ENCODE measurements at regions of chr1 and their contacts with region 1.

Region 1: GRCh38 chr1:161225534-161226319 is at the start of gene TOMM40L:
- DNase-seq: peak; percentile 92
- H3K4me3 Mint-ChIP-seq: peak within 1 kb of the TSS; percentile 100
- H3K27ac Mint-ChIP-seq: peak within 1 kb of the TSS; percentile 86
- H3K4me1 Mint-ChIP-seq: peaks cover 23% of the 10 kb centered on the region
- H3K27me3 Mint-ChIP-seq: no peaks in the 10 kb centered on the region
- total RNA-seq, gene TOMM40L: 14.8 to 15.4 TPM

Region 2: DNA sequence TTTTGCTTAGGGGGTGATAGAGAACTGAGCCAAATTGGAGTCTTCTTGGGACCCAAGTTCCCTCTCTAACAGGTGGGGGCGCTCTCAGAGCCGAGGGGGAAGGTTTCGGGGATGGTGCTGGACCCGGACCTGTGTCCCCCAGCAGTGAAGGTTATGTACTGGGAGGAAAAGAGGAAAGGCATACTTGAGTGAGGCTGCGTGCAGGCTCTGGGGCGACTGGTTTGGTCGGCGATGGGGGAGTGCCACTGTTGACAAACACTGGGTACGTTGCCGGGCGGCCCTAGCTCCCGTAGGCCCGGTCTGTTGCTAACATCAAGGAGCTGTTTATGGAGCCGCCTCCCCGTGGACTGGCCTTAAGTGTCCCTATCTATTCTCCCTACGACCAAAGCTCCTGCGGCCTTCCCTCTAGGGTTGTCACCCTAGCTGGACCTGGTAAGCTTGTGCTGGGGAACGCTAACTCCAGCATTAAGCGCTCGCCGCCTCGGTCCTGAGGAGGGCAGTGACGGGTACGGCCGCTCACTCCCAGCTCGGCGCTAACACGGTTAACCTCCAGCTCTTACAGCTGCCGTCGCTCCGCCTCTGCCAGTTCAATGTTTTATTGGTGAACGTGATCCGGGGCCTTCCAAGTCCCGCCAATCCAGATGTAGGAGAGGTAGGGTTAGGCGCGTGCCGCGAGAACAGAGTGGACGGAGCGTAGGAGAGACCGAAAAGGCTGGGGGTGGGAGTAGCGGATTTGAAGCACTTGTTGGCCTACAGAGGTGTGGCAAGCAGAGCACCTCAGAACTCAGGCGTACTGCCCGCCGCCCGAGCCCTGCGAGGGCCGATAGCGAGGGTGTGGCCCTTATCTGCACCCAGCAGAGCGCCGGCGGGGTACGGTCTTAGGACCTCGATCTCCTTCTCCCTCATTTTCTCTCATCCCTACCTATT is 59.7 kb before region 1 on chr1 and contains the start of gene PPOX:
- CTCF ChIA-PET with region 1: interaction called, 32 read pairs
- POLR2A ChIA-PET with region 1: interaction called, 3 read pairs
- intact Hi-C with region 1: loop called (anchors 1 kb)
- DNase-seq: peak; percentile 97
- H3K4me3 Mint-ChIP-seq: peak within 1 kb of the TSS; percentile 86
- H3K27ac Mint-ChIP-seq: peak within 1 kb of the TSS; percentile 93
- H3K4me1 Mint-ChIP-seq: peaks cover 48% of the 10 kb centered on the region
- H3K27me3 Mint-ChIP-seq: no peaks in the 10 kb centered on the region
- total RNA-seq, gene PPOX: 27.0 to 30.7 TPM

Region 3: DNA sequence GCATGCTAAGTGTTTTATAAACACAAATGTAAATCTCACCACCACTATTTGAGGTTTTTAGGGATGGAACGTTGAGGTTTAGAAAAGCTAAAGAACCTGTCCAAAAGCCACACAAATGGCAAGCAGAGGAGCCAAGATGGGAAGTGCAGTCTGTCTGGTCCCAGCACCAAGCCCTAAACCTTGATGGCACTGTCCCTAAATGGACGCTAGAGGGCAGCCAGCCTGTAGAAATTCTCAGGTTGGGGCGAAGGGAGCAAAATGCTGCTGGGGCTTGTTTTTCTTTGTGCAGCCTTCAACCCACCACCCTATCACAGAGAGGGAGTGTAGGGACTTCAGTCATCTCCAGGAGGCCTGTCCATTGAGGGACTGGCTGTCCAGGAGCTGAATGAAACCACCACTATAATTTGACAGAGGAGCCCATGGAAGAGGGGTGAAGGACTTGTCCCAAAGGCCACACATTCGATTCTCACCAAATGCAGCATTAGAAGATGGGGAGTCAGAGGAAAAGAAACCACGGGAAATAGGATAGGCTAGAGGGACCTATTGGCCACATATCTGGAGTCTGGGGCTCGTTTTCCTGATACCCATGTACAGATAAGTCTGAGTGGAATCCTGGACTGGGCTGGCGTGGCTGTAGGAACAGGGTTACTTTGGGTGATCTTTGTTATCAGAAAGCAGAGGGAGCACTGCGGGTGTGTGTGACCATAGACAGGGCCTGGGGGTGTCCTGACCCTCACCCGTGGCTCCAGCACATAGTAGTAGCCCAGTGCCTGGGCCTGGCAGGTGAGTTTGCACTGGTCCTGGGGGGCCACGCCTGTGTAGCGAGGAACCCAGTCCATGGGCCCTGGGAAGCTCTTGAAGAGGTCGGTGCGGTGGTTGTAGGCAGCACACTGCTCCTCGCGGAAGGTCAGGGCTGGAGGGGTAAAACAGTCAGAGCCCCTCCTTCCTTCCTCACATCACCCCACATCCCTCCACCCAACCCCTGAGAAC is 33.0 kb before region 1 on chr1:
- CTCF ChIA-PET with region 1: interaction called, 69 read pairs
- POLR2A ChIA-PET with region 1: no interaction called
- intact Hi-C with region 1: loop called (anchors 1 kb)
- DNase-seq: peak; percentile 81
- H3K4me3 Mint-ChIP-seq: no peak overlapping the region
- H3K27ac Mint-ChIP-seq: peak overlapping the region; percentile 42
- H3K4me1 Mint-ChIP-seq: peaks cover 29% of the 10 kb centered on the region
- H3K27me3 Mint-ChIP-seq: no peaks in the 10 kb centered on the region

Region 4: DNA sequence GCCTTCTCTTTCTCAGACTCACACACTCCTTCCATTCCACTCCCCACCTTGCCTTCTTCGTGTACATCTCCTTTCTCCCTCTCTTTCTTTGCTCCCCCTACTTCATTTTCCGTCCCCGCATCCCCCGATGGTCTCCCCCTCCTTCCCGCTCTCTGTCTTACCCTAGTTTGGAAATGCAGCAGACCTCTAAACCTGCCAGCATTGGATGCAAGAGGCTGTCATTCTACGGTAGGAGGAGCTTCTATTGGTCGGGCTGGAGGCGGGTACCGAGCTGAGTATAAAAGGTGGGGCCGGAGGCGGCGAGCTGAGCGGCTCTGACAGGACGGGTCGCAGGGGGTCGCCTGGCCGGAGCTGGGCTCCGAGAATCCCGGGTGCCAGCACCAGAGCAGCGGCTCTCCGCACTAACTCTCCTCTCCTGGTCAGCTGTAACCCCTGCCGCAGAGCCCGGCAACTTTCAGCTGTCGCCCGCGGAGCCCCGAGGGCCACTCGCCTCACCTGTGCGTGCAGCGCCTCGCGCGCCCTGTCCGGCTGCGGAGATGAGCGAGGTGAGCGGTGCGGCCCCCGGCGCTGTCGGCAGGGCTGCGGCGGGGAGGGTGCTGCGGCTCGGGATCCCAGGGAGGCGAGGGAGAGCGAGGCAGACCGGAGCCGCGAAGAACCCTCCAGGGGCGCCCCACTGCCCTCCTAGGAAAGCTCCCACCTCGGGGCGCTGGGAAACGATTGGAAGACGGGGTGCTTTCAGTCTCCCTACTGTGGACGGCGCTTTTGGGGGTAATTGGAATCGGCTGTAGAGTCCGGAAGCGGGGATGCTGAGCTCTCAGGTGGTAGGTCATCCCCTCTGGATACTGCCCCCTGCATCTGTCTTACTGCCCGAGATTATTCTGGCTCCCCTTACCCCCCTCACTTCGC is 33.0 kb after region 1 on chr1 and contains the start of gene PCP4L1:
- CTCF ChIA-PET with region 1: interaction called, 14 read pairs
- POLR2A ChIA-PET with region 1: interaction called, 4 read pairs
- intact Hi-C with region 1: no loop called
- DNase-seq: peak; percentile 48
- H3K4me3 Mint-ChIP-seq: peak within 1 kb of the TSS; percentile 30
- H3K27ac Mint-ChIP-seq: no peak within 1 kb of the TSS
- H3K4me1 Mint-ChIP-seq: peaks cover 9% of the 10 kb centered on the region
- H3K27me3 Mint-ChIP-seq: peaks cover 48% of the 10 kb centered on the region
- total RNA-seq, gene PCP4L1: 0.22 TPM in 1 of 2 experiments, not detected in the other

Region 5: GRCh38 chr1:161314201-161314981 is 88.7 kb after region 1 on chr1 and contains the start of gene SDHC:
- CTCF ChIA-PET with region 1: interaction called, 18 read pairs
- POLR2A ChIA-PET with region 1: interaction called, 3 read pairs
- intact Hi-C with region 1: loop called (anchors 1 kb)
- DNase-seq: peak; percentile 92
- H3K4me3 Mint-ChIP-seq: peak within 1 kb of the TSS; percentile 96
- H3K27ac Mint-ChIP-seq: peak within 1 kb of the TSS; percentile 93
- H3K4me1 Mint-ChIP-seq: peaks cover 18% of the 10 kb centered on the region
- H3K27me3 Mint-ChIP-seq: no peaks in the 10 kb centered on the region
- total RNA-seq, gene SDHC: 212 to 215 TPM

Region 6: GRCh38 chr1:161382214-161383019 is 156.7 kb after region 1 on chr1:
- CTCF ChIA-PET with region 1: interaction called, 213 read pairs
- POLR2A ChIA-PET with region 1: no interaction called
- intact Hi-C with region 1: loop called (anchors 1 kb)
- DNase-seq: no peak
- H3K4me3 Mint-ChIP-seq: no peak overlapping the region
- H3K27ac Mint-ChIP-seq: peak overlapping the region; percentile 42
- H3K4me1 Mint-ChIP-seq: peaks cover 19% of the 10 kb centered on the region
- H3K27me3 Mint-ChIP-seq: no peaks in the 10 kb centered on the region

Measured in activated CD4-positive, alpha-beta memory T cell treated with anti-CD3 and anti-CD28 coated beads for 36 hours (primary cell).